ENCODE measurements at regions of chr15 and their contacts with region 1.

Region 1: GRCh38 chr15:45402162-45402954 is 24.0 kb upstream of the GATM start:
- DNase-seq: peak; percentile 97
- ATAC-seq: peak; percentile 97
- H3K4me3 Mint-ChIP-seq: peak overlapping the region; percentile 98
- H3K27ac Mint-ChIP-seq: peak overlapping the region; percentile 98
- H3K4me1 Mint-ChIP-seq: peaks cover 32% of the 10 kb centered on the region
- H3K27me3 Mint-ChIP-seq: no peaks in the 10 kb centered on the region

Region 2: GRCh38 chr15:44711356-44712107 is 690.8 kb before region 1 on chr15 and contains the start of gene B2M:
- CTCF ChIA-PET with region 1: no interaction called
- POLR2A ChIA-PET with region 1: no interaction called
- intact Hi-C with region 1: loop called in 1 of 2 experiments (anchors 5 kb)
- DNase-seq: peak; percentile 97
- ATAC-seq: peak; percentile 78
- H3K4me3 Mint-ChIP-seq: peak within 1 kb of the TSS; percentile 96
- H3K27ac Mint-ChIP-seq: peak within 1 kb of the TSS; percentile 100
- H3K4me1 Mint-ChIP-seq: peaks cover 34% of the 10 kb centered on the region
- H3K27me3 Mint-ChIP-seq: no peaks in the 10 kb centered on the region
- total RNA-seq, gene B2M: 5,181 to 7,416 TPM

Region 3: GRCh38 chr15:45118131-45118588 is 284.2 kb before region 1 on chr15:
- CTCF ChIA-PET with region 1: interaction called, 3 read pairs
- POLR2A ChIA-PET with region 1: no interaction called
- intact Hi-C with region 1: loop called in 1 of 2 experiments (anchors 5 kb)
- DNase-seq: peak; percentile 92
- ATAC-seq: peak; percentile 99
- H3K4me3 Mint-ChIP-seq: peak overlapping the region; percentile 13
- H3K27ac Mint-ChIP-seq: no peak overlapping the region
- H3K4me1 Mint-ChIP-seq: peaks cover 27% of the 10 kb centered on the region
- H3K27me3 Mint-ChIP-seq: peaks cover 46% of the 10 kb centered on the region

Region 4: DNA sequence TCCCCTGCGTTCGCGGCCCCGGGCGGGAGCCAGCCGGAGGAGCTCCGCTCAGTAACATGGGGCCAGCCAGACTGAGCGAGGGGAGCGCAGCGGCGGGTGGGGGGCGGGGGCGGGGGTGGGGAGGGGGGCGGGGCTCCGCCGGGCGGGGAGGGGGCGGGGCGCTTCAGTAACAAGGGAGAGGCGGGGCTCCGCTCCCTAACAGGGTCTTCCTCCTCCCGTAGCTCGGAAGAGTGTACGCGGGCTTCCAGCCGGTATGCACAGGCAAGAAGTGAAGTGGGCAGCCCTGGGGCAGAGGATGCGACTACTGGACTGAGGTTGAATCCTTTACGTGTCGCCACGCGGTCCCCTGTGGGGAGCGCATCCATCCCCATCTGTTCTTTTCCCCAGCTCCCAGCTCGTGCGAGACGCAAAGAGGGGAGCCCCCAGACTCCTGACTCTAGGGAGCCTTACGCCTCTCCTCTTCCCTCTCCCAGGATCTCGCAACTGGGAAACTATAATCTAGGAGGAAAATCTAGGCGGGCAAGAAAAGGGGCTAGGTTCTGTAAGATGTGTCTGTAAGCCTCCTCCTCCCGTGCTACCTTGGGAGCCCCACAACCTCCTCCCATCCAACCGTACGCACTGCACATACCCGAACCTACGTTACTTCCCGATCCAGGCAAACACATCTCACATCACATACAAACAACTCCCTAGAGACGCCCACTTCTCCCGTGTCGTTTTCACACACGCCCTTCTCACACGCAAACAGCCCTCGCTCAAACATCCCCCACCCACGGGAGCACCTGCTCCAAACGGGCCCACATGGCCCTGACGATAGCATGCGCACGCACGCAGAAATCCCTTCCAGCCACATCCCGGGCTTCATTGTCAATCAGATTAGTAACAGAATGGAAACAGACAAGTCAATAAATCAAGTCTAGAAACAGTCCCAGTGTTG is 214.2 kb before region 1 on chr15 and contains the start of gene SHF:
- CTCF ChIA-PET with region 1: interaction called, 3 read pairs
- POLR2A ChIA-PET with region 1: interaction called, 4 read pairs
- intact Hi-C with region 1: loop called in 1 of 2 experiments (anchors 1 kb)
- DNase-seq: peak; percentile 90
- ATAC-seq: peak; percentile 82
- H3K4me3 Mint-ChIP-seq: peak within 1 kb of the TSS; percentile 85
- H3K27ac Mint-ChIP-seq: peak within 1 kb of the TSS; percentile 98
- H3K4me1 Mint-ChIP-seq: peaks cover 28% of the 10 kb centered on the region
- H3K27me3 Mint-ChIP-seq: no peaks in the 10 kb centered on the region
- total RNA-seq, gene SHF: 17.9 to 18.7 TPM

Region 5: GRCh38 chr15:45279024-45279698 is 123.2 kb before region 1 on chr15:
- CTCF ChIA-PET with region 1: interaction called, 5 read pairs
- POLR2A ChIA-PET with region 1: interaction called, 4 read pairs
- intact Hi-C with region 1: loop called (anchors 1 to 2 kb)
- DNase-seq: peak; percentile 97
- ATAC-seq: peak; percentile 100
- H3K4me3 Mint-ChIP-seq: peak overlapping the region; percentile 83
- H3K27ac Mint-ChIP-seq: peak overlapping the region; percentile 83
- H3K4me1 Mint-ChIP-seq: peaks cover 18% of the 10 kb centered on the region
- H3K27me3 Mint-ChIP-seq: peaks cover 1% of the 10 kb centered on the region

Region 6: GRCh38 chr15:45386420-45386819 is 15.9 kb before region 1 on chr15:
- CTCF ChIA-PET with region 1: interaction called, 32 read pairs
- POLR2A ChIA-PET with region 1: no interaction called
- intact Hi-C with region 1: no loop called
- DNase-seq: no peak
- ATAC-seq: no peak
- H3K4me3 Mint-ChIP-seq: no peak overlapping the region
- H3K27ac Mint-ChIP-seq: no peak overlapping the region
- H3K4me1 Mint-ChIP-seq: no peaks in the 10 kb centered on the region
- H3K27me3 Mint-ChIP-seq: no peaks in the 10 kb centered on the region

Region 7: GRCh38 chr15:45587095-45587860 is 184.9 kb after region 1 on chr15 and contains the start of gene BLOC1S6:
- CTCF ChIA-PET with region 1: interaction called, 7 read pairs
- POLR2A ChIA-PET with region 1: interaction called, 23 read pairs
- intact Hi-C with region 1: loop called (anchors 1 kb)
- DNase-seq: peak; percentile 91
- ATAC-seq: peak; percentile 81
- H3K4me3 Mint-ChIP-seq: peak within 1 kb of the TSS; percentile 94
- H3K27ac Mint-ChIP-seq: peak within 1 kb of the TSS; percentile 100
- H3K4me1 Mint-ChIP-seq: peaks cover 48% of the 10 kb centered on the region
- H3K27me3 Mint-ChIP-seq: no peaks in the 10 kb centered on the region
- total RNA-seq, gene BLOC1S6: 36.1 to 52.5 TPM